ENCODE measurements at regions of chr4 and their contacts with region 1.

Region 1: DNA sequence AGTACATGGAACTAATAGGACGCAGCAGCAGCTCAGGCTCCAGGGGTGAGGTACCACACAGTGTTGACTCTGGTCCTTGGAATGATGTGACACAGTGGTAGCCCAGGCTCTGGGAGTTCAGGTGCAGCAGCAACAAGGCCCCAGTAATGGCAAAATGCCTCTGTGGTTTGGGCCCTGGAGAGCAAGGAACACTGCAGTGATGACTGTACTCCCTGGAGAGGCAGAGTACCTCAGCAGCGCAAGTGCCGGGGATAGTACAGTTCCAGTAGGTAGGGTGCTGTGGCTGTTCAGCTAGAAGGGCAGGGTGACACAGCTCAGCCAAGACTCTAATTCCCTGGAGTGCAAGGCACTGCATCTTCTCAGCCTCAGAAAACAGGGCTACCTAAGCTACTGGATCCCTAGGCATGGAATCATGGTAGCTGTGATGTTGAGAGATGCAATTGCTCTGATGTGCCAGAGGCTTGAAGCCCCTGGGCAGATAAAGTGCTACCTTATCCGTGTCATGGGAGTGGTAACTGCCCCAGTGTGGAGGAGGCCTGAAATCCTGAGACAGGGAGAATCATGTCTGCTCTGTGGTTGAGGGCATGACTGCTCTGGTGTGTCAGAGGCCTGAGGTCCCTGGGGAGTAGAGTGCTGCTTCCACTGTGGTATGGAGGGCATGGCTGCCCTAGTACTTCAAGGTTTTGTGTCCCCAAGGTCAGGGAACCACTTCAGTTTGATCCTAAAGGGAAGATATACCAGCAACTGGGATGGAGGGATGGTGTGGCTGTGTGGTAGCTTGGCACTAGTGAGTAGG is 55.2 kb downstream of the AREG start:
- DNase-seq: peak; percentile 37
- H3K4me3 ChIP-seq: no peak overlapping the region
- H3K27ac ChIP-seq: no peak overlapping the region
- H3K4me1 ChIP-seq: peaks cover 48% of the 10 kb centered on the region
- H3K27me3 ChIP-seq: no peaks in the 10 kb centered on the region
- CTCF ChIP-seq: no peak

Region 2: DNA sequence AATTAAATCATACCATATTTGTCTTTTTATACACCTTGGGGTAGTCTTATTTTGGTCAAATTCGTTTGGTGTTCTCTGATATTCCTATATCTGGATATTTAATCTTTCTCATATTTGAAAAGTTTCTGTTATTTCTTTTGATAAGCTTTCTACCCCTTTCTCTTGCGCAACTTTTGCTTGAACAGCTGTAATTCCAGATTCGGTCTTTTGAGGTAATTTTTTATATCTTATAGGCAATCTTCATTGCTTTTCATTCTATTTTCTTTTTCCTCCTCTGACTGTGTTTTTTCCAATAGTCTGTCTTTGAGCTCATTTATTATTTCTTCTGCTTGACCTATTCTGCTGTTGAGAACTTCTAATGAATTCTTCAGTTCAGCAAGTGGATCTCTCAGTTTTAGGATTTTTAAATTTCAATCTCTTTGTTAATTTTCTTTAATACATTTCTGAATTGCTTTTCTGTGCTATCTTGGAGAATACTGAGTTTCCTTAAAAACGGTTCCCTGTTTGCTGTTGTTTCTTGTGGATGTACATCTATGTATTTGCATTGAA is 353.5 kb before region 1 on chr4:
- CTCF ChIA-PET with region 1: no interaction called
- dilution Hi-C with region 1: no loop called
- in situ Hi-C with region 1: no loop called
- intact Hi-C with region 1: no loop called
- DNase-seq: no peak
- H3K4me3 ChIP-seq: no peak overlapping the region
- H3K27ac ChIP-seq: no peak overlapping the region
- H3K4me1 ChIP-seq: no peaks in the 10 kb centered on the region
- H3K27me3 ChIP-seq: no peaks in the 10 kb centered on the region
- CTCF ChIP-seq: no peak

Region 3: DNA sequence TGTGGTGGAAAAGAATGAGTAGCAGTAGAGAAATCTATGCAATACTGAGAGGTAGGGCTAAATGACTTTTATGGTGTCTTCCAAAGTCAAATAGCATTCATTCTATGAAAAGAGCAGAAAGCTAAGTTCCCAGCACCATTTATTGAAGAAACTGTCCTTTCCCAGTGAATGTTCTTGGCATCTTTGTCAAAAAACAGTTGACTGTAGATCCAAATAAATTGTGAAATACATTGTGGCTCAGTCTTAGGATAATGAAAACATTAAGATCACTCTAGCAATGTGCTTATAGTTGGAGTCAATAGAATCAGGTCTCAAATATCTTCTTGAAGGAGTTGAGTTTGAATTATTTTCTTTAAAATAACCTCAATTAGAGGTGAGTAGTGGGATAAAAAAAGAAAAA is 35.9 kb before region 1 on chr4:
- CTCF ChIA-PET with region 1: no interaction called
- dilution Hi-C with region 1: loop called (anchors 5 kb)
- in situ Hi-C with region 1: loop called in 1 of 2 experiments (anchors 10 kb)
- intact Hi-C with region 1: no loop called
- DNase-seq: no peak
- H3K4me3 ChIP-seq: no peak overlapping the region
- H3K27ac ChIP-seq: no peak overlapping the region
- H3K4me1 ChIP-seq: no peaks in the 10 kb centered on the region
- H3K27me3 ChIP-seq: no peaks in the 10 kb centered on the region
- CTCF ChIP-seq: no peak

Region 4: DNA sequence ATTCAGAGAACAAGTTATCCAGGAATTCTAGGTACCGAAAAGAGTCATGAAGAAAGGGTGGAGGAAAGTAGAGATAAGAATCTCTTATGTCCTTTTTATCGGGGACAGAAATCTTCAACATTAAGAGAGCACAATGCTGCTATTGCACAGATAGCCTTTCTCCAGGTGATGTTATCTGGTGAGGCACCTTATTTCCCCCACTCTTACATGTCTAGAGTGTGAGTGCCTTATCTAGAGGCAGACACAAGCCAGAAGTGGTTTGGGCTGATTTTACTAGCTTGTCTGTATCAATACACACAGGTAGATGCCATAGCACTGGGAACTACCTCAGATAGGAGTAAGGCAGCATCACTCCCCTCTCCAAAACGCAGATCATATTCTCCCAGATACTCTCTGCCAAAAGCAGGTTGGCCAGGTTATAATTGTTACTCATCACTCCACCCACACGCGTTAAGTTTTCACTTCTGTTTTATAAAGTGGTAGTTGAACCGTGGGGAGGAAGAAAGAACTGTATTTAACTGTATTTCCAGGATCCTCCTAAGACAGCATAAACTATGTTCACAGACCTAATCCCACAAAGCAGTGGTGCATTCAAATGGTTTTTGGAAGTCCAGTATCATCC is 16.8 kb before region 1 on chr4:
- CTCF ChIA-PET with region 1: no interaction called
- dilution Hi-C with region 1: no loop called
- in situ Hi-C with region 1: no loop called
- intact Hi-C with region 1: no loop called
- DNase-seq: no peak
- H3K4me3 ChIP-seq: no peak overlapping the region
- H3K27ac ChIP-seq: no peak overlapping the region
- H3K4me1 ChIP-seq: peaks cover 11% of the 10 kb centered on the region
- H3K27me3 ChIP-seq: no peaks in the 10 kb centered on the region
- CTCF ChIP-seq: no peak

Region 5: GRCh38 chr4:74578329-74578728 is 78.1 kb after region 1 on chr4:
- CTCF ChIA-PET with region 1: no interaction called
- dilution Hi-C with region 1: no loop called
- in situ Hi-C with region 1: no loop called
- intact Hi-C with region 1: no loop called
- DNase-seq: no peak
- H3K4me3 ChIP-seq: no peak overlapping the region
- H3K27ac ChIP-seq: no peak overlapping the region
- H3K4me1 ChIP-seq: peaks cover 5% of the 10 kb centered on the region
- H3K27me3 ChIP-seq: no peaks in the 10 kb centered on the region
- CTCF ChIP-seq: no peak